A673 (cell line): ENCODE measurements at regions of chr17 and their contacts with region 1.

Region 1: DNA sequence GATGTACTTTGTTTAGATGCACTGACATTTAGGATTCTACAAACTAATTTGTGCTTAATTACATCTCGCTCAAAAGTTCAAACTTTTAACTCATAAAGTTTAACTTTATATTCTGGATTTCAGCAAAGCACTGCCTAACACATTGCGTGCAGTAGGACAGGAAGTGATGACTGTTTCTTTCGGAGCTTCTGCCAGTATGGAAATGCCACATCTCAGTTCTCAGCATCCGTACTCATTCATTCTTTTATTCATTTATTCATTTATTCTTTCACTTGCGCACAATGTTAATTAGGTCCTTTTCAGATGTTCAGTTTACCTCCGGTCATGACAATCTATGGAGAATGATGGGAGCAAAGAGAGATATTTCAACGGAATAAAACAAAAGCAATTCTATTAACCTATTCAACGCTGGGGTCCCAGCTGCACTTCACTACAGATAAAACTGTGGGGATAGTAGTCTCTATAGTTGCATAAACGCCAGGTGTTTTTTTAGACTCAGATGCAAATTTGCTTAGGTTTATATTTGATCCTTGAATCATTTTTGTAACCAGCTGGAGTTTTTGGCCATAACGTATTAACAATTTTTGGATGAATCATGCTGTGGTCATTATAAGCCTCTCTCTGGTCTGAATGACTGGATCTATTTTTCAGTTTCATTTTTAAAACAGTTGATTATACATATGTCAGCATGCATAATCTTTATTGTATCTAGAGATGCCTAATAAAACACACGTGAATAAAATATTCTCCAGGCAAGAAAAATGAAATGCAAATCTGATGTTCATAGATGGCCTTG is 143.9 kb downstream of the KCNJ2 start:
- DNase-seq: peak; percentile 22
- H3K4me3 ChIP-seq: no peak overlapping the region
- H3K27ac ChIP-seq: no peak overlapping the region
- H3K4me1 ChIP-seq: peaks cover 5% of the 10 kb centered on the region
- H3K27me3 ChIP-seq: no peaks in the 10 kb centered on the region
- CTCF ChIP-seq: no peak

Region 2: DNA sequence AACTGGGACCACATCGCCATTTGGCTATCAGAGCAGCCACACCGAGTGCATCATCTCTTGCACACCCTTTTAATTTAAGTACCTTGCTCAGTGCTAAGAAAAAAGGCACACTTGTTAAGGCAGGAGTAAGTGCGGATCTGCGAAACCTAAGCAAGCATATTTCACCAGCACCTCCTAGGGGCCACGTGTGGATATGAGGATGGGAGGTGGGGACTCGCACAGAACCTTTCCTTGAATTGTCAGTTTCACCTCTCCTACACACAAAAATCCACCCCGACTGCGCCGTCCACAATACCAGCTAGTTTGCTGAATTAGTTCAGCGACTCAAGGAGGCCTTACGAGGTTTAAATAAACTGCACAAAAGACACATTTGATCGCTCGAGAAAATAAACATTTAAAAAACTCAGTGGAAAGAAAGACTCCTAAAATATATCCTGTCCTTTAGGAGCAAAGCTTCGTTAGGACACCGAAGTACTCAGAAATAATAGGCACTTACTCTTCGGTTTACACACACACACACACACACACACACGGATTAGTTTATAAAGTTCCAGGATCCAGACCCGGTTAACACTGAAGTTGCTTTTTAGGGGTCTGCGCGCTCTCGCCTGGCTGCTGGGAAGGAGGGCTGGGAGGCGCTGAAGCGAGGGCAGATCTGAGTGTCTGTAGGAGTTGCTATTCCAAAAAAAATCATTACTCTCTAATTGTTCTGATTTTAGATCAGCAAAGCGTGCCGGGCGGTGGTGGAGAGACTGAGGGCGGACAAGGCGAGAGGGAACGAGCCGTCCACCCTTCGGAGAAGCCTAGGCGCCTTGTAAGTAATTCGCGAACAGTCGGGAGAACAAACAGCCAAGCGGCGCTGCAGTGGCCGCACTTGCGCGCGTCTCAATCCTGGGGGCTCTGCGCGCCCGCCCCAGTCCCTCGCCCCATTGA is 144.9 kb before region 1 on chr17:
- CTCF ChIA-PET with region 1: no interaction called
- POLR2A ChIA-PET with region 1: no interaction called
- intact Hi-C with region 1: no loop called
- DNase-seq: peak; percentile 65
- H3K4me3 ChIP-seq: peak overlapping the region; percentile 36
- H3K27ac ChIP-seq: no peak overlapping the region
- H3K4me1 ChIP-seq: peaks cover 13% of the 10 kb centered on the region
- H3K27me3 ChIP-seq: peaks cover 83% of the 10 kb centered on the region
- CTCF ChIP-seq: peak; percentile 73

Region 3: GRCh38 chr17:70276906-70277305 is 36.3 kb before region 1 on chr17:
- CTCF ChIA-PET with region 1: interaction called, 18 read pairs
- POLR2A ChIA-PET with region 1: no interaction called
- intact Hi-C with region 1: no loop called
- DNase-seq: no peak
- H3K4me3 ChIP-seq: no peak overlapping the region
- H3K27ac ChIP-seq: no peak overlapping the region
- H3K4me1 ChIP-seq: no peaks in the 10 kb centered on the region
- H3K27me3 ChIP-seq: no peaks in the 10 kb centered on the region
- CTCF ChIP-seq: no peak